H1 (cell line): ENCODE measurements at regions of chr17 and their contacts with region 1.

Region 1: GRCh38 chr17:73342050-73342522 is 30.3 kb upstream of the CDC42EP4 start:
- DNase-seq: peak; percentile 70 to 78
- H3K4me3 ChIP-seq: peak overlapping the region in 2 of 4 experiments; percentile 14 to 17; a peak in 3 of 8 replicates
- H3K27ac ChIP-seq: peak overlapping the region; percentile 82
- H3K4me1 ChIP-seq: peaks cover 10 to 33% (median 27%) of the 10 kb centered on the region in 4 experiments
- H3K27me3 ChIP-seq: no peaks in the 10 kb centered on the region
- CTCF ChIP-seq: no peak
- EP300 ChIP-seq: peak in 1 of 2 experiments; percentile 86; a peak in 1 of 3 replicates
- POLR2A ChIP-seq: peak in 1 of 2 experiments; percentile 46; a peak in 1 of 3 replicates
- RAD21 ChIP-seq: peak in 1 of 2 experiments; percentile 12; a peak in 1 of 4 replicates

Region 2: DNA sequence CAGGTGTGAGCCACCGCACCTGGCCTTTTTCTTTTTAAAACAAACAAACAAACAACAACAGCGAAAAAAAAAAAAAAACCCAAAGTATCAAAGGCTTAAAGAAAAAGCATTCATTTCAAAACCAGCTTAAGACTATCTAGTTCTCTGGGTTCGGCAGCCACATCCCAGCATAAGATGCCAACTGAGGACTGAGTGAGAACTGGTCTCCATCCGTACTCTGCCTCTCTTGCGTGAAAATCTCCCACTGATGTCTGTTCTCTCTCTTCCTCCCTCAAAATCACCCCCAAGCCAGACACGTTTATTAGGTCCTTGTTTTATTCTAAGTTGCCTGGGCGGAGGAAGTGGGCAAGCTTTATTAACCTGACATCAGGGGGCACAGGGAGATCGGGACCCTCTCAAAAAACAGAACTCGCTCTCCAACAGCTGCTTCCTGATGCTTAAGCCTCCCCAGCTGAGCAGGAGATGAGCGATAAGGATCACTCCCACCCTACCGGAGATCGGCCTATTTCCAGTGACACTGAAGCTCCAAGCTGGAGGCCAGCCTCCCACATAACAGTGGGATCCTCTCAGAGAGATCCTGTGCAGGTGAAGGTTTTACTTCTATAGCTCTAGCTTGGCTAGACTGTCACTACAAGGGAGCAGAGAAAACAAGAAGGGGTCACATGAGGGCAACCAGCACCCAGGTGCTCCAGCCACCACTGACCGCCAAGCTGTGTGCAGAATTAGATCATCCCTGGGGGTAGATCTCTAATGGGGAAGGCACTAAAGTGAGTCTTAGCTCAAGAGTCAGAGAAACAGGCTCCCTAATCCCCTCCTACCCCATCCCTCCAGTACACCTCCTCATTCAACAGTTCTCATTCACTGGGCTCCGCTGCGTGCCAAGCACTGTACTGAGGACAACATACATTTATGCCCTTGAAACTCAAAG is 43.9 kb before region 1 on chr17:
- CTCF ChIA-PET with region 1: no interaction called
- POLR2A ChIA-PET with region 1: no interaction called
- DNase-seq: no peak
- H3K4me3 ChIP-seq: no peak overlapping the region
- H3K27ac ChIP-seq: no peak overlapping the region
- H3K4me1 ChIP-seq: no peaks in the 10 kb centered on the region
- H3K27me3 ChIP-seq: no peaks in the 10 kb centered on the region
- CTCF ChIP-seq: no peak
- EP300 ChIP-seq: no peak
- POLR2A ChIP-seq: no peak
- RAD21 ChIP-seq: no peak

Region 3: DNA sequence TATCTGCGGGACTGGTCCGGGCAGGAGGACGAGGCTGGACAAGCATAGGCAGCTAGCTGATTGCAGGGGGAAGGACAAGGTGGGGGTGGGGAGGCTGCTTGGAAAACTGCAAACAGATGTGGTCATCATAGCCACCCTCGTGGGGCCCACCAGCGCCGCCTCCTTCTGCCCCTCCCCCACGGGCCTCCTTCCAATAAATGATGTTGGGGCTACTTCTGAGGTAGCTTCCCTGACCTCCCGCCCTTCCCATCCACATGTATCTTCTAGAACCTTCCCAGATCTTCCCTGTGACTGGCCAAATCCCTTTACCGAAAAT is 18.0 kb before region 1 on chr17:
- CTCF ChIA-PET with region 1: interaction called, 7 read pairs
- POLR2A ChIA-PET with region 1: interaction called, 11 read pairs
- DNase-seq: no peak
- H3K4me3 ChIP-seq: no peak overlapping the region
- H3K27ac ChIP-seq: no peak overlapping the region
- H3K4me1 ChIP-seq: peaks cover 4 to 13% (median 9%) of the 10 kb centered on the region in 4 experiments; a peak in 6 of 7 replicates
- H3K27me3 ChIP-seq: no peaks in the 10 kb centered on the region
- CTCF ChIP-seq: no peak
- EP300 ChIP-seq: no peak
- POLR2A ChIP-seq: no peak
- RAD21 ChIP-seq: no peak

Region 4: DNA sequence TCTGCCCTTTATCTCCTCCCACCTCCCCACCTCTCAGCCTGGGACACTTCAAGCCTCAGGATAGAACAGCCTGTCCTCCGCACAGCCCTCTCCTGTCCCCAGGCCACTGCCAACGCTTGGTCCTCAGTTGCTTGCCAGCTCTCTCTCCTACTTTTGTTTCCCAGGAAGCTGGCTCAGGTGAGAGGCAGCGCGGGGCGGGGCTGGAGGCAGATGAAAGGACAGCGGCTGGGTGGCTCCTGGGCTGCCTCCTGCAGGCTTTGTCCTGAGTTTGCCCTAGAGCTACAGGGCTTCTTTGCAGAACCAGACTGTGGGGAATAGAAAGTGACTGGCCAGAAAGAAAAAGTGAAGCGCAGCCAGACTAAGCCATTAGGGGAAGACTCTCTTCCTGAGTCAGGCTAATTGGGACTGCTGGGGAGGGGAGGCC is 17.9 kb after region 1 on chr17:
- CTCF ChIA-PET with region 1: interaction called, 33 read pairs
- POLR2A ChIA-PET with region 1: interaction called, 10 read pairs
- DNase-seq: peak; percentile 59 to 81
- H3K4me3 ChIP-seq: peak overlapping the region in 1 of 4 experiments; percentile 34; a peak in 3 of 8 replicates
- H3K27ac ChIP-seq: no peak overlapping the region
- H3K4me1 ChIP-seq: peaks cover 4 to 33% (median 26%) of the 10 kb centered on the region in 4 experiments
- H3K27me3 ChIP-seq: no peaks in the 10 kb centered on the region
- CTCF ChIP-seq: peak; percentile 33 to 42 (median 34)
- EP300 ChIP-seq: no peak
- POLR2A ChIP-seq: no peak
- RAD21 ChIP-seq: peak; percentile 23 to 58; a peak in 3 of 4 replicates